HepG2 (cell line): ENCODE measurements at regions of chr16 and their contacts with region 1.

Region 1: GRCh38 chr16:87874639-87875465 is 5.5 kb upstream of the SLC7A5 start:
- DNase-seq: no peak
- ATAC-seq: no peak
- H3K4me3 ChIP-seq: no peak overlapping the region
- H3K27ac ChIP-seq: no peak overlapping the region
- H3K4me1 ChIP-seq: peaks cover 79% of the 10 kb centered on the region
- H3K27me3 ChIP-seq: no peaks in the 10 kb centered on the region
- CTCF ChIP-seq: no peak
- EP300 ChIP-seq: no peak
- POLR2A ChIP-seq: no peak
- RAD21 ChIP-seq: no peak

Region 2: DNA sequence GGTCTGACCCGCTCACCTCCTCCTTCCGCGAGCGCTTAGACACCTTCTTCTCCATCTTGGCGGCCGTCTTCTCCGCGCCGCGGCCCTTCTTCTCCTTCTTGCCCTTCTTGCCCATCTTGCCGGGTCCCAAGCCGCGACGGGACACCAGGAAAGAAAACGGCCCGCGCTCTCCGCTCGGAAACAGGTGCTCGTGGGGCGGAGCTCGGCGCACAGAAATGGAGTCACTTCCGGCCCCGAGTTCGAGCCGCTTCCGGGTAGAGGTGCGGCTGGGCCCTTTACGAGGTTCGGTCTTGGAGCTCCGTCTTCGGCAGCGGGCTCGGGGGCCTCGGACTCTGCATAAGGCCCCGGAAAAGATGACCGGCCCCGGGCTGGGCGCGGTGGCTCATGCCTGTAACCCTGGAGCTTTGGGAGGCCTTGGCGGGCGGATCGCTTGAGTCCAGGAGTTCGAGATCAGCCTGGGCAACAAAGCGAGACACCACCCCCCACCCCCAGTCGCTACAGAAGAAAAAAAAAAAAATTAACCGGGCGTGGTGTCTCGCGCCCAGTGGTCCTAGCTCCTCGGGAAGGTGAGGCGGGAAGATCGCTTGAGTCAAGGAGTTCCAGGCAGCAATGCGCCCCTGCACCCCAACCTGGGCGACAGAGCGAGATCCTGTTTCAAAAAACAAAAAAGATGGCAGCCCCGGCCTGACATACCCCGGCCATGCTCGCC is 108.9 kb before region 1 on chr16 and contains the start of gene KLHDC4:
- CTCF ChIA-PET with region 1: interaction called, 3 read pairs
- POLR2A ChIA-PET with region 1: interaction called, 25 read pairs
- in situ Hi-C with region 1: no loop called
- intact Hi-C with region 1: no loop called
- DNase-seq: peak; percentile 78
- ATAC-seq: peak; percentile 90
- H3K4me3 ChIP-seq: peak within 1 kb of the TSS; percentile 87 to 97 (median 94)
- H3K27ac ChIP-seq: peak within 1 kb of the TSS; percentile 79
- H3K4me1 ChIP-seq: peaks cover 45% of the 10 kb centered on the region
- H3K27me3 ChIP-seq: no peaks in the 10 kb centered on the region; a peak in 1 of 5 replicates
- CTCF ChIP-seq: peak; percentile 17; the same call in 1 of the 2 replicates
- EP300 ChIP-seq: peak in 1 of 2 experiments; percentile 29; a peak in 2 of 4 replicates
- POLR2A ChIP-seq: peak; percentile 80 to 85
- RAD21 ChIP-seq: no peak
- total RNA-seq, gene KLHDC4: 26.7 and 31.8 TPM in 2 replicates

Region 3: GRCh38 chr16:87812200-87812656 is 62.6 kb before region 1 on chr16:
- CTCF ChIA-PET with region 1: interaction called, 7 read pairs
- POLR2A ChIA-PET with region 1: interaction called, 41 read pairs
- in situ Hi-C with region 1: no loop called
- intact Hi-C with region 1: loop called (anchors 2 kb)
- DNase-seq: peak; percentile 68
- ATAC-seq: peak; percentile 70
- H3K4me3 ChIP-seq: peak overlapping the region in 1 of 3 experiments; percentile 41; a peak in 1 of 6 replicates
- H3K27ac ChIP-seq: no peak overlapping the region
- H3K4me1 ChIP-seq: peaks cover 72% of the 10 kb centered on the region
- H3K27me3 ChIP-seq: no peaks in the 10 kb centered on the region
- CTCF ChIP-seq: peak; percentile 68
- EP300 ChIP-seq: no peak
- POLR2A ChIP-seq: no peak
- RAD21 ChIP-seq: peak; percentile 73

Region 4: DNA sequence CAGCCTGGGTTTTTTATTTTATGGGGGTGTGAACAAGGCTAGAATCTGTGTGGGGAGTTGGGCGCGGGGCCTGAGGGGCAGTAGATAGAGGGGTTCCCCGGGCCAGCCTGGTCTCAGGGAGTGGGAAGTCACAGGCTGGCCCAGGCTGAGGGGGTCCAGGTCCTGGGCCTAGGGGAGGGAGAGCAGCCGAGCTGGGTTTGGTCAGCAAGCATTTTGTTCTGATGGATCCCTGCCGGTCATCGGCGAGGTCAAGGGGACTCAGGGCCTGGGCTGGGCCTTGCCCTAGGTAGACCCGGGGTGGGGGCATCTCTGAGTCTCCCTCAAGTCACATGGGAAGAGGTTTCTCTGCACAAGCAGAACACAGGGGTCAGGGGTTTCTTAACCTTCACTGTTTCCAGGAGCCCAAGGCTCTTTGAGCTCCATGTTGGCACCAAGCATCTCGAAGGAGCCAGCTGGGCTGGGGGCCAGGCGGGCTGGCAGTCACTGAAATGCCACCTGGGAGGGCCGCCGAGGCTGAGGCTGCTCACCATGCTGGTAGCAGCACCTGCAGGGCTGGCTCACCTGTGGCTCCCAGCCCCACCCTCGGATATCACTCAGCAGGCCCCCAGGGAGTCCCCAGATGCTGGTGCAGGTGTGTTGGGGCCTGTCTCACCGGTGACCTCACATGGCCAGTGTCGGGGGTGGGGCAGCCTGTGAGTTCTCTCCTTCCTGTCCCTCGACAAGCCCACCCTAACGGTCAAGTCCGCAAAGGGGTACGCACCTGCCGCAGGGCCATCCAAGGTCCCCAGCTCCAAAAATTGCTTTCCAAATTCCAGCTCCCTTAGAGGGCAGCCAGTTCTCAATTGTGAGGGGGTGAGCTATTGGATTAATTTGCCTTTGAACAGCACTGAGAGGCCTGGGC is 46.5 kb before region 1 on chr16:
- CTCF ChIA-PET with region 1: no interaction called
- POLR2A ChIA-PET with region 1: interaction called, 20 read pairs
- in situ Hi-C with region 1: no loop called
- intact Hi-C with region 1: loop called (anchors 1 kb)
- DNase-seq: no peak
- ATAC-seq: peak; percentile 10
- H3K4me3 ChIP-seq: no peak overlapping the region
- H3K27ac ChIP-seq: no peak overlapping the region
- H3K4me1 ChIP-seq: peaks cover 49% of the 10 kb centered on the region
- H3K27me3 ChIP-seq: peaks cover 6 to 24% of the 10 kb centered on the region in 2 experiments; a peak in 4 of 5 replicates
- CTCF ChIP-seq: 0 out of 2 replicates have a peak, but pooled peaks have one; percentile 29
- EP300 ChIP-seq: no peak
- POLR2A ChIP-seq: peak in 1 of 2 experiments; percentile 35; a peak in 2 of 4 replicates
- RAD21 ChIP-seq: no peak

Region 5: GRCh38 chr16:87853411-87854052 is 21.3 kb before region 1 on chr16:
- CTCF ChIA-PET with region 1: interaction called, 47 read pairs
- POLR2A ChIA-PET with region 1: interaction called, 399 read pairs
- in situ Hi-C with region 1: no loop called
- intact Hi-C with region 1: loop called (anchors 1 kb)
- DNase-seq: peak; percentile 89
- ATAC-seq: peak; percentile 2
- H3K4me3 ChIP-seq: peak overlapping the region in 2 of 3 experiments; percentile 18 to 62; a peak in 4 of 6 replicates
- H3K27ac ChIP-seq: peak overlapping the region; percentile 98
- H3K4me1 ChIP-seq: peaks cover 100% of the 10 kb centered on the region
- H3K27me3 ChIP-seq: no peaks in the 10 kb centered on the region
- CTCF ChIP-seq: peak; percentile 39
- EP300 ChIP-seq: peak; percentile 12 to 63; a peak in 3 of 4 replicates
- POLR2A ChIP-seq: peak in 1 of 2 experiments; percentile 82; a peak in 2 of 4 replicates
- RAD21 ChIP-seq: peak; percentile 36; the same call in 1 of the 2 replicates

Region 6: DNA sequence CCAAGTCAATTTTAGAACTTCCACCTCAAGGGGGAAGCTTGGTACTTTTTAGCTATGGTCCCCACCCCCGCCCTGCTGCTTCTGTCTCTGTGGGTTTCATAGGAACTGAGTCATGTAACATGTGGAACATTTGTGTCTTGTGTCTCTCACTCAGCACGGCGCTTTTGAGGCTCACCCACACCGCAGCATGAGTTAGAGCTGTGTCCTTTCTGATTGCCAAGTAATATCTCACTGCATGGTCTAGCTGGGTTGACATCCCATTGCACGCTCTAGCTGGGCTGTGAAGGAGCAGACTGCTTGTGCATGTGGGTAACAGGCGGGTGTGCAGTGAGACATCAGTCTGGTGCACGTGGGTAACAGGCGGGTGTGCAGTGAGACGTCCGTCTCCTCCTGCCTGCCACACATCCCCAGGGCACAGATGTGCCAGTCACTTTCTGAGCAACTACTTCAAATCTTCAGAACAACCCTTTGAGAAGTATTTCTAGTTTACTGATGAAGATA is 20.8 kb after region 1 on chr16:
- CTCF ChIA-PET with region 1: no interaction called
- POLR2A ChIA-PET with region 1: no interaction called
- in situ Hi-C with region 1: no loop called
- intact Hi-C with region 1: no loop called
- DNase-seq: no peak
- ATAC-seq: no peak
- H3K4me3 ChIP-seq: no peak overlapping the region
- H3K27ac ChIP-seq: no peak overlapping the region
- H3K4me1 ChIP-seq: no peaks in the 10 kb centered on the region
- H3K27me3 ChIP-seq: no peaks in the 10 kb centered on the region
- CTCF ChIP-seq: no peak
- EP300 ChIP-seq: no peak
- POLR2A ChIP-seq: 0 out of 4 replicates have a peak, but pooled peaks of 1 of the 2 experiments have one; percentile 42
- RAD21 ChIP-seq: no peak

Region 7: GRCh38 chr16:87976665-87977064 is 101.8 kb after region 1 on chr16:
- CTCF ChIA-PET with region 1: no interaction called
- POLR2A ChIA-PET with region 1: no interaction called
- in situ Hi-C with region 1: no loop called
- intact Hi-C with region 1: no loop called
- DNase-seq: no peak
- ATAC-seq: no peak
- H3K4me3 ChIP-seq: no peak overlapping the region
- H3K27ac ChIP-seq: no peak overlapping the region
- H3K4me1 ChIP-seq: peaks cover 7% of the 10 kb centered on the region; the same call in 1 of the 2 replicates
- H3K27me3 ChIP-seq: no peaks in the 10 kb centered on the region
- CTCF ChIP-seq: no peak
- EP300 ChIP-seq: no peak
- POLR2A ChIP-seq: no peak
- RAD21 ChIP-seq: no peak

Region 8: GRCh38 chr16:89067677-89068406 is 1193.0 kb after region 1 on chr16:
- CTCF ChIA-PET with region 1: no interaction called
- POLR2A ChIA-PET with region 1: no interaction called
- in situ Hi-C with region 1: no loop called
- intact Hi-C with region 1: no loop called
- DNase-seq: no peak
- ATAC-seq: no peak
- H3K4me3 ChIP-seq: no peak overlapping the region
- H3K27ac ChIP-seq: no peak overlapping the region
- H3K4me1 ChIP-seq: peaks cover 4% of the 10 kb centered on the region; the same call in 1 of the 2 replicates
- H3K27me3 ChIP-seq: peaks cover 35 to 86% of the 10 kb centered on the region in 2 experiments
- CTCF ChIP-seq: no peak
- EP300 ChIP-seq: no peak
- POLR2A ChIP-seq: no peak
- RAD21 ChIP-seq: no peak